ENCODE measurements at regions of chr1 and their contacts with region 1.

Region 1: DNA sequence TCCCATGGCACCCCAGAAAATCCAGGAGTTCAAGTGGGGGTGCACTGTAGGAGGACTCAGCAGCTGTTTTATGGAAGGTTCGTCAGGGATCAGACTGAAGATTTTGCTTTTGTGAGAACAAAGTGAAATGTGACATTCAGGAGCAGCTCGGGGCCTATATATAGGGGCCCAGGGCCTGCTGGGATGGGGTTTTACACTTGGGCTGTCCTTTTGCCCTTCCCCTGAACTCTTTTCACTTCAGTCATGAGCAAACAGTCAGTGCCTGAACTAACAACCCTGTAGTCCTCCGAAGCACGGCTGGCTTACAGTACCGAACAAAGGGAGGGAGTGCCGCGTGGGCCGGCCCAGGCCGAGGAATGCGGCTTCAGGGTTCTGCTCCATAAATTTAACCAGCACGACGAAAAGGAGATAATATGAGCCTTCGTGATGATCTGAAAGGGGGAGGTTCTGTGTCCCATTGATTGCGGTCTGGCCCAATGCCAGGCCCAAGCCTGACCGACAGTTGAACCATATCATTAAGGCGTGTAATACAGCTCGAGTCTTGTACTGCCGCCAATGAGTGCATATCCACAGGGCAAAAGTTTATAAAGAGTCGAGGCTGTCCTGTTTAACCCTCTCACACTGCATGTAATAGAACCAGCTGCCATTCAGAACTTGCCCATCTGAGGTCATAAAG is 139.9 kb downstream of the DHRS3 start:
- DNase-seq: peak; percentile 96
- H3K4me3 ChIP-seq: no peak overlapping the region
- H3K27ac ChIP-seq: peak overlapping the region; percentile 5
- H3K4me1 ChIP-seq: peaks cover 63% of the 10 kb centered on the region
- H3K27me3 ChIP-seq: no peaks in the 10 kb centered on the region
- CTCF ChIP-seq: no peak

Region 2: GRCh38 chr1:12435639-12436344 is 42.3 kb before region 1 on chr1:
- CTCF ChIA-PET with region 1: no interaction called
- dilution Hi-C with region 1: no loop called
- in situ Hi-C with region 1: no loop called
- intact Hi-C with region 1: loop called (anchors 2 kb)
- DNase-seq: no peak
- H3K4me3 ChIP-seq: no peak overlapping the region
- H3K27ac ChIP-seq: no peak overlapping the region
- H3K4me1 ChIP-seq: peaks cover 62% of the 10 kb centered on the region
- H3K27me3 ChIP-seq: no peaks in the 10 kb centered on the region
- CTCF ChIP-seq: no peak

Region 3: GRCh38 chr1:12565094-12565965 is 87.3 kb after region 1 on chr1:
- CTCF ChIA-PET with region 1: no interaction called
- dilution Hi-C with region 1: loop called (anchors 5 kb)
- in situ Hi-C with region 1: no loop called
- intact Hi-C with region 1: no loop called
- DNase-seq: no peak
- H3K4me3 ChIP-seq: no peak overlapping the region
- H3K27ac ChIP-seq: no peak overlapping the region
- H3K4me1 ChIP-seq: no peaks in the 10 kb centered on the region
- H3K27me3 ChIP-seq: no peaks in the 10 kb centered on the region
- CTCF ChIP-seq: no peak